Activated naive CD4-positive, alpha-beta T cell treated with anti-CD3 and anti-CD28 coated beads, Interleukin-2, amount 10 ng/mL, durations not matched to agents 7 days and 5 days (primary cell): ENCODE measurements at regions of chr1 and their contacts with region 1.

Region 1: GRCh38 chr1:151968058-151968457 is 25.6 kb downstream of the S100A10 start:
- DNase-seq: peak; percentile 66
- H3K4me3 Mint-ChIP-seq: no peak overlapping the region
- H3K27ac Mint-ChIP-seq: no peak overlapping the region
- H3K4me1 Mint-ChIP-seq: peaks cover 25% of the 10 kb centered on the region
- H3K27me3 Mint-ChIP-seq: peaks cover 13% of the 10 kb centered on the region

Region 2: GRCh38 chr1:151888972-151889570 is 79.0 kb before region 1 on chr1:
- CTCF ChIA-PET with region 1: interaction called, 11 read pairs
- DNase-seq: no peak
- H3K4me3 Mint-ChIP-seq: no peak overlapping the region
- H3K27ac Mint-ChIP-seq: no peak overlapping the region
- H3K4me1 Mint-ChIP-seq: peaks cover 14% of the 10 kb centered on the region
- H3K27me3 Mint-ChIP-seq: no peaks in the 10 kb centered on the region

Region 3: DNA sequence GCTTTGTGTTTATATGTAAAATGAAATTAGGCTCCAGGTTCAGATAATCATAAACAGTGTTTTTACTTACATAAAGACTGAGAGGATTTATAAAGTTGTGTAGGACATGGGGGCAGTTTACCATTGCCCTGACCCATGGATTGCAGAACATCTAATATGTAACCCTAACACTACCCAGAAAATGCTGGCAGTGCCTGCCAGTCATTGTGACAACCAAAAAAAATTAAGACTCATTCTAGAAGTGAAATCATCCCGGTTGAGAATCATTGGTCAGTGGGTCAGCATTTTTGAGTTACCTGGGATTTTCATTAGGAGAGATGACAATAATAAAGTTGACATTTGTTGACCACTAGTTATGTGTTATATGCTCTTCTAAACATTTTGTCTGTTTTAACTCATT is 27.5 kb before region 1 on chr1:
- CTCF ChIA-PET with region 1: interaction called, 35 read pairs
- DNase-seq: no peak
- H3K4me3 Mint-ChIP-seq: no peak overlapping the region
- H3K27ac Mint-ChIP-seq: no peak overlapping the region
- H3K4me1 Mint-ChIP-seq: peaks cover 10% of the 10 kb centered on the region
- H3K27me3 Mint-ChIP-seq: peaks cover 3% of the 10 kb centered on the region

Region 4: DNA sequence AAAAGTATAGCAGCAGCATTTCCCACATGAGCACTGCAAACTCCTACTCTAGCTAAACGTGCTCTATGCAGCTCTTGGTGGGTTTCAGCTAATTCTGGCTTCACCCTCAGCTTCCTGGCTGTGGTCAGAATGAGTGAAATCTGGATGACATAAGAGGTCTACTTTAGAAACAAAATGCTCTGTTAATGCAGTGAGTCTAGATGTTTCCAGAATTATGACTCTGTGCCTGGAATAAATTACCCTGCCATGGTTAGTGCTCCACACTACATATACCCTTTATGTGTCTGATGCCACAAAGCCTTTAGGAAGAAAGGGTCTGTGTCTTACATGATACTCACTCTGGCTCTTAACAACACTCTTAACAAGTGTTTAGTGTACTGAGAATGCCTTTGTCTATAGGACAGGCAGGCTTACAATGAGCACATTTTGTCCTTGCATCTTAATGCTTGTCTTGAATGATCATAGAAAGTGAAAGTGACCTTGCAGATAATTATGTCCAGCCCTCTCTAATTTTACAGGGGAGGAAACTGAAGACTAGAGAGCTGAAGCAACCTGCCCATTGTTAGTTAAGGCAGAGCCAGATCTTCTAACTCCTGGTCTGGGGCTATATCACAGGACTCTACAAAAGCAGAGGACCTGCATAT is 16.4 kb after region 1 on chr1:
- CTCF ChIA-PET with region 1: interaction called, 104 read pairs
- DNase-seq: peak; percentile 47
- H3K4me3 Mint-ChIP-seq: no peak overlapping the region
- H3K27ac Mint-ChIP-seq: peak overlapping the region; percentile 82
- H3K4me1 Mint-ChIP-seq: peaks cover 68% of the 10 kb centered on the region
- H3K27me3 Mint-ChIP-seq: no peaks in the 10 kb centered on the region

Region 5: GRCh38 chr1:152013664-152014237 is 45.7 kb after region 1 on chr1:
- CTCF ChIA-PET with region 1: interaction called, 15 read pairs
- DNase-seq: peak; percentile 63
- H3K4me3 Mint-ChIP-seq: no peak overlapping the region
- H3K27ac Mint-ChIP-seq: no peak overlapping the region
- H3K4me1 Mint-ChIP-seq: peaks cover 3% of the 10 kb centered on the region
- H3K27me3 Mint-ChIP-seq: peaks cover 57% of the 10 kb centered on the region